Caco-2 (cell line): ENCODE measurements at regions of chr2 and their contacts with region 1.

Region 1: GRCh38 chr2:21924640-21925285 is 801.0 kb downstream of the TDRD15 start:
- DNase-seq: no peak
- H3K4me3 ChIP-seq: no peak overlapping the region
- H3K4me3 Mint-ChIP-seq: no peak overlapping the region
- H3K27ac Mint-ChIP-seq: no peak overlapping the region
- H3K4me1 ChIP-seq: no peaks in the 10 kb centered on the region
- H3K4me1 Mint-ChIP-seq: no peaks in the 10 kb centered on the region
- H3K27me3 ChIP-seq: no peaks in the 10 kb centered on the region
- H3K27me3 Mint-ChIP-seq: no peaks in the 10 kb centered on the region
- CTCF ChIP-seq: no peak

Region 2: GRCh38 chr2:21812766-21813165 is 112.0 kb before region 1 on chr2:
- CTCF ChIA-PET with region 1: no interaction called
- POLR2A ChIA-PET with region 1: no interaction called
- intact Hi-C with region 1: no loop called
- DNase-seq: peak in 1 of 2 experiments; percentile 14
- H3K4me3 ChIP-seq: no peak overlapping the region
- H3K4me3 Mint-ChIP-seq: no peak overlapping the region
- H3K27ac Mint-ChIP-seq: no peak overlapping the region
- H3K4me1 ChIP-seq: no peaks in the 10 kb centered on the region
- H3K4me1 Mint-ChIP-seq: no peaks in the 10 kb centered on the region
- H3K27me3 ChIP-seq: no peaks in the 10 kb centered on the region
- H3K27me3 Mint-ChIP-seq: peaks cover 3% of the 10 kb centered on the region
- CTCF ChIP-seq: no peak

Region 3: GRCh38 chr2:22124003-22124402 is 199.2 kb after region 1 on chr2:
- CTCF ChIA-PET with region 1: no interaction called
- POLR2A ChIA-PET with region 1: no interaction called
- intact Hi-C with region 1: loop called (anchors 10 kb)
- DNase-seq: peak in 1 of 2 experiments; percentile 10
- H3K4me3 ChIP-seq: no peak overlapping the region
- H3K4me3 Mint-ChIP-seq: no peak overlapping the region
- H3K27ac Mint-ChIP-seq: no peak overlapping the region
- H3K4me1 ChIP-seq: no peaks in the 10 kb centered on the region
- H3K4me1 Mint-ChIP-seq: no peaks in the 10 kb centered on the region
- H3K27me3 ChIP-seq: no peaks in the 10 kb centered on the region
- H3K27me3 Mint-ChIP-seq: peaks cover 3% of the 10 kb centered on the region
- CTCF ChIP-seq: peak in 1 of 2 experiments; percentile 34

Region 4: DNA sequence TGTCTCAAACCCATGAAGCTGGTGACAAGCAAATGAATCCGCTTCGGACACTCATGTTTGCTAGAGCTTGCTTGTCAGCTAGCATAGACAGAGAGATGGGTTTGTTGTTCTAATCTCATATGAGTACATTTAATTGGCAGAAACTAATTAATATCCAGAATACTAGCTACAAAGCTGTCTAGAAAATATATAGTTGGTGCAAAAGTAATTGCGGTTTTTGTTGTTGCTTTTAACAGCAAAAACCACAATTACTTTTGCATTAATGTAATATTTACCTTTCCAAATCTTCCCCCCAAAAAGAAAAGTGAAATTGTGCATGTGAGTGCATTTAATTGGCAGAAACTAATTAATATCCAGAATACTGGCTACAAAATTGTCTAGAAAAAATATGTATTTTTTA is 314.2 kb after region 1 on chr2:
- CTCF ChIA-PET with region 1: no interaction called
- POLR2A ChIA-PET with region 1: no interaction called
- intact Hi-C with region 1: loop called (anchors 1 kb)
- DNase-seq: no peak
- H3K4me3 ChIP-seq: no peak overlapping the region
- H3K4me3 Mint-ChIP-seq: no peak overlapping the region
- H3K27ac Mint-ChIP-seq: no peak overlapping the region
- H3K4me1 ChIP-seq: no peaks in the 10 kb centered on the region
- H3K4me1 Mint-ChIP-seq: no peaks in the 10 kb centered on the region
- H3K27me3 ChIP-seq: no peaks in the 10 kb centered on the region
- H3K27me3 Mint-ChIP-seq: peaks cover 3% of the 10 kb centered on the region
- CTCF ChIP-seq: no peak